ENCODE measurements at regions of chr19 and their contacts with region 1.

Region 1: DNA sequence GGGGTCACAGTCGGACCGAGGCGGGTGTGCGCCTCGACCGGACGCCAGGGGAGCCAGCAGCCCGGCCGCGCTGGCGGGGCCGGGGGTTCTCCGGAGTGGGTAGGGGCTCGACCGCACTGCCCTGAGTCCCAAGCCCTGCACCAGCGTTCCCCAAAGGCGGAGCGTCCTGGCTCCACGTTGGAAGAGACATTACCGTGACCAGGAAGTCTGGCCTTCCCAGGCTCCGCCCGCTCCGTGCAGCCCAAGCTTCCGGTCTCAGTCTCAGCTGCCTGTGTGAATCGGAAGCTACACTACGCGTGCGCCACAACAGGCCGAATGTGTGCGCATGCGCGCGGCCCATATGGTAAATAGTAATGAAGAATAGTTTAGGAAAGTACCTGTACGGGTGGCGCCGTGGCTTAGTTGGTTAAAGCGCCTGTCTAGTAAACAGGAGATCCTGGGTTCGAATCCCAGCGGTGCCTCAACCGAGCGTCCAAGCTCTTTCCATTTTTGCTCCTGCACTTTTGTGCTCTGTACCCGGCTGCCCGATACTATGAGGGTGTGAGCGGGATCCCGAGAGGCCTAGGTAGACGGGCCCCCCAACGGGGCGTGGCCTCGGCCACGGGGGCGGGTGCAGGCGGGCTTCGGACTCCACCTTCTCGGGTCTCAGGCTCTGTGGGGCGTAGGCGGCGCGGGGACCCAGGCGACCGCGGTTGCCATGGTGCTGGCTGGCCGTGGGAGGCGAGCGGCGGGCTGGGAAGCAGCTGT is 17.3 kb upstream of the LRP3 start:
- H3K4me3 ChIP-seq: peak overlapping the region; percentile 59
- H3K27ac ChIP-seq: peak overlapping the region; percentile 88
- H3K4me1 ChIP-seq: peaks cover 20% of the 10 kb centered on the region
- CTCF ChIP-seq: no peak; the same call in 1 of the 2 replicates

Region 2: DNA sequence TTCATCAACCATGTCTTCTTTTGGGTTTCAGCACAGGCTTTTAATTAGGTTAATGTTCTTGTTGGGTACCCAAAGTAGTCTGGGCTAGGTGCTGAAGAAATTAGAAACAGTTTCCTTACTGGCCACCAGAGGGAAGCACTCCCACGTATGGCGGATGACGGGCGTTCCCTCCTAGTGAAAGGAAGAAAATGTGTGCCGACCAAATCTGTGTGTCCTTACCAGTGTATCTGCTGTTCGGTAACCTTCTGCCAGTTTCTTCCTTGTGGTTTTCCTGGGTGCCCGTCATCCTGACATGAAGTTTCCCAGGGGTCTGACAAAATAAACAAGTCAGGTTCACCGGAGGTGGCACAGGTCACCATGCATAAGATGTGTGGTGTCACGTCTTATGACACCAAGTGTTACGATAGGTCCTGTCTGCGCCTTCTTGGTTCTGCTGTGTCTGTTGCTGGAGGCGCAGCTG is 50.9 kb before region 1 on chr19:
- CTCF ChIA-PET with region 1: interaction called, 41 read pairs
- POLR2A ChIA-PET with region 1: interaction called, 4 read pairs
- H3K4me3 ChIP-seq: no peak overlapping the region
- H3K27ac ChIP-seq: 0 out of 2 replicates have a peak overlapping the region, but pooled peaks have one; percentile 11
- H3K4me1 ChIP-seq: peaks cover 4% of the 10 kb centered on the region
- CTCF ChIP-seq: peak; percentile 86

Region 3: GRCh38 chr19:33156334-33156733 is 20.5 kb before region 1 on chr19:
- CTCF ChIA-PET with region 1: interaction called, 35 read pairs
- POLR2A ChIA-PET with region 1: interaction called, 37 read pairs
- H3K4me3 ChIP-seq: no peak overlapping the region
- H3K27ac ChIP-seq: no peak overlapping the region
- H3K4me1 ChIP-seq: no peaks in the 10 kb centered on the region
- CTCF ChIP-seq: no peak

Region 4: GRCh38 chr19:33193865-33194362 is 17.1 kb after region 1 on chr19 and contains the start of gene LRP3:
- CTCF ChIA-PET with region 1: interaction called, 154 read pairs
- POLR2A ChIA-PET with region 1: interaction called, 30 read pairs
- H3K4me3 ChIP-seq: peak within 1 kb of the TSS; percentile 47
- H3K27ac ChIP-seq: peak within 1 kb of the TSS; percentile 95
- H3K4me1 ChIP-seq: peaks cover 15% of the 10 kb centered on the region
- CTCF ChIP-seq: no peak

Region 5: DNA sequence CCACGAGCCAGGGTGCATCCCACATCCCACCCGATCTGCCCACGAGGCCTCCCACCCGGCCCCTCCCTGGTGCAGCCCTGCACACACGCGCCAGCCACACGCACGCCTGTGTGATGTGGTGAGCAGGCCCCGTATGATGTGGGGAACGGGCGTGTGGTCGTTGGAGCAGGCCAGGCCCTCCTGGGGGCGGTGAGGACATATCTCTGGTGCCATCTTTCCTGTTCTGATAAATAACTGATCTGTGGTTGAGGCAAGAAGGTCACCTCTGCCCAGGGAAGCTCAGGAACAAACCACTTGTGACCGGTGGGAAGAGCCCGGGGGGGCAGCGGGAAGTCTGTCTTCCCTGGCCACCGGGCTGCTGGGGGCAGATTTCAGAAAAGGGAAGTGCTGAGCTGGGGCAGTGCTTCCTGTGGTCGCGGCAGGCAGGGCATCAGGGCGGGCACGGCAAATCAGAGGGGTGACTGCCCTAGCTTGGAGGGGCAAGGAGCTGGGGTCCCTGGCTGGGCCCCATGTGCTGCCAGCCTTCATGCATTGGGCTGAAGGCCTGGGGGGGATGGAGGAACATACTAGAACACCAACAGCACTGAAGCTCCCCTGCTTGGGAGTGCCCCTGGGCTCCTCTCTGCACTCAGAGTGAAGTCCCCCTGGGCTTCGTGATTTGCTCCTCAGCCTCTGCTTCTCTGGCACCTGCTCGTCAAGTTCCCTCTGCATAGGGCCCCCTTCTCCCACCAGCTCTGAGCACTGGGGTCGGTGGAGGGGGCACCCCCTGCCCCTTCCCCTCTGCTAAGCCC is 84.0 kb after region 1 on chr19:
- CTCF ChIA-PET with region 1: no interaction called
- POLR2A ChIA-PET with region 1: no interaction called
- H3K4me3 ChIP-seq: no peak overlapping the region
- H3K27ac ChIP-seq: no peak overlapping the region
- H3K4me1 ChIP-seq: no peaks in the 10 kb centered on the region; the same call in 1 of the 2 replicates
- CTCF ChIP-seq: no peak

Region 6: DNA sequence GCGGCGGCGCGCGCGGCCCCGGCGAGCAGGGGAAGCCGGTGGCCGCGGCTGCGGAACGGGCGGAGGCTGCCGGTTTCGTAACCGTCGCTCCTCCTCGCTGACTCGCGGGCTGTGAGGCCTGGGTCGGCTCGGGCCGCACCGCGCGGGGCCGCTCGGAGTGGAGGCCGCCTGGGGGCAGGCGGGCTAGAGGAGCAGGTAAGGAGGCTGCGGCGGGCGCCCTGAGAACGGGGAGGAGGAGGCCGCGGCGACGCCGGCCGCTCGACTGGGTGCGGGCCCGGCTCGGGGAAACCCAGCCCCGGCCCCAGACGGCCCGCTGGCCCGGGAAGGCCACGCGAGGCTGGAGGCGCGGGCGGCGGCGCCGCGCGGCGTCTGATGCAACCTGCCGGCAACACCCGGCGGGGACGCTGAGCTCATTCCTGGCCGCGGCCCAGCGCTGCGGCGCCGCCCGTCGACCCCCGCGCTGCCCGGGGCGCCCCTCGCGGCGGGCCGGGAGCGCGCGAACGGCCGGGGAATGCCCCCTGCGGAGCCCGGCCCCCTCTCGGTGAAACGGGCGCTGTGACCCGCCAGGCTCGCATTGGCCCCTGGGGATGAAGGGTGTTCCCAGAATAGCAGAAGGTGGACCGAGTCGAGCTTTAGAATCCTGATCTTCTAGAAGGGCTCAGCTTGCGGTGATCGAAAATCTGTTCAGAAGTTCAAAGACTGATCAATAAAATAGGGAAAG is 197.0 kb after region 1 on chr19 and contains the start of gene CEBPG:
- CTCF ChIA-PET with region 1: no interaction called
- POLR2A ChIA-PET with region 1: interaction called, 16 read pairs
- H3K4me3 ChIP-seq: peak within 1 kb of the TSS; percentile 82
- H3K27ac ChIP-seq: peak within 1 kb of the TSS; percentile 100
- H3K4me1 ChIP-seq: peaks cover 47% of the 10 kb centered on the region
- CTCF ChIP-seq: peak; percentile 80

Measured in HEK293 (cell line).